ENCODE measurements at regions of chr1 and their contacts with region 1.

Region 1: GRCh38 chr1:206658264-206658980 is 23.1 kb downstream of the DYRK3 start:
- DNase-seq: peak; percentile 79
- ATAC-seq: peak; percentile 91
- H3K4me3 Mint-ChIP-seq: peak overlapping the region; percentile 58
- H3K27ac Mint-ChIP-seq: no peak overlapping the region
- H3K4me1 Mint-ChIP-seq: peaks cover 20% of the 10 kb centered on the region
- H3K27me3 Mint-ChIP-seq: peaks cover 43% of the 10 kb centered on the region
- CTCF ChIP-seq: peak; percentile 97

Region 2: GRCh38 chr1:206430031-206430983 is 228.1 kb before region 1 on chr1:
- CTCF ChIA-PET with region 1: no interaction called
- POLR2A ChIA-PET with region 1: no interaction called
- DNase-seq: no peak
- ATAC-seq: no peak
- H3K4me3 Mint-ChIP-seq: no peak overlapping the region
- H3K27ac Mint-ChIP-seq: no peak overlapping the region
- H3K4me1 Mint-ChIP-seq: no peaks in the 10 kb centered on the region
- H3K27me3 Mint-ChIP-seq: no peaks in the 10 kb centered on the region
- CTCF ChIP-seq: no peak

Region 3: DNA sequence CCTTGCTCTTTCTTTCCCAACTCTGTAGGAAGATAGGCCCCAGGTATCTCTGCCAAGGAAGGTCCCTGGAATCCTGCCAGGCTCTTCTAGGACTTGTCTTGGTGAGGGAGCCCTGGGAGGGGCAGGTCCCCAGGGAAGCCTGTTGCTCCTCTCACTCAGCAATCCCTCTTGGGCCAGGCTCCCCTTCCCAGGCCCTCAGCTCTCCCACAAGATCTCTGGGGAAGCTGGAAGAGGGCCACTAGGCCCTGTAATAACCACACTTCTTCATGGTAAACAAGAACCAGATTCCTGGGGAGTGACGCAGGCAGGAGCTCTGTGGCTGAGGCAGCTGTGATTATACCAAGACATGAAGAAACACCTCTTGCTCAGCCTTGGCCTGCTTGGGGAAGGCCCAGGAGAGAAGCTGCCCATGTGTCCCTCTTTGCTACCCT is 16.3 kb after region 1 on chr1:
- CTCF ChIA-PET with region 1: interaction called, 37 read pairs
- POLR2A ChIA-PET with region 1: no interaction called
- DNase-seq: no peak
- ATAC-seq: no peak
- H3K4me3 Mint-ChIP-seq: no peak overlapping the region
- H3K27ac Mint-ChIP-seq: no peak overlapping the region
- H3K4me1 Mint-ChIP-seq: peaks cover 8% of the 10 kb centered on the region
- H3K27me3 Mint-ChIP-seq: peaks cover 8% of the 10 kb centered on the region; the same call in 1 of the 2 replicates
- CTCF ChIP-seq: no peak

Region 4: DNA sequence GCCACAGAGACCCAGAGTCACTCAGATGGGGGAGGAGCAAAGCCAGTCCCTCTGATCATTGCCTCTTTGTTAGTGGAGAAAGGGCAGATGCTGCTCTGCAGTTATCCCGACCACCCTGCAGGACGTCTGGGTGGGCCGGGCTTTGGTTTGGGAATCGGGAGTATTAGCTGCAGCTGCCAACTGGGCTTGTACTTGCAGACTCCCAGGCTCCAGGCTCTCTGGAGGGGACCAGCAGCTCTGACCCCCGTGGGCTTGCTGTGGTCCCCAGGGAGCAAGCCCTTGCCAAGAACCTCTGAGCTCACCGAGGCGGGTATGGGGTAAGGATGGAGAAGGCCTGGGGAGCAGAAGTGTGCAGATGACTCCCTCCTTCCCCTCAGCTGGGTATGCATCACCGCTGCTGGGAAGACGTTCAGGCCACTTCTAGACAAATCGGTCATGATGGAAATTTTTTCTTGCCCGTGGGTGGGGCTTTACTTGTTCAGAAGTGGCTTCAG is 47.9 kb after region 1 on chr1:
- CTCF ChIA-PET with region 1: interaction called, 16 read pairs
- POLR2A ChIA-PET with region 1: no interaction called
- DNase-seq: no peak
- ATAC-seq: peak; percentile 50
- H3K4me3 Mint-ChIP-seq: no peak overlapping the region
- H3K27ac Mint-ChIP-seq: no peak overlapping the region
- H3K4me1 Mint-ChIP-seq: peaks cover 76% of the 10 kb centered on the region
- H3K27me3 Mint-ChIP-seq: no peaks in the 10 kb centered on the region
- CTCF ChIP-seq: no peak

Region 5: DNA sequence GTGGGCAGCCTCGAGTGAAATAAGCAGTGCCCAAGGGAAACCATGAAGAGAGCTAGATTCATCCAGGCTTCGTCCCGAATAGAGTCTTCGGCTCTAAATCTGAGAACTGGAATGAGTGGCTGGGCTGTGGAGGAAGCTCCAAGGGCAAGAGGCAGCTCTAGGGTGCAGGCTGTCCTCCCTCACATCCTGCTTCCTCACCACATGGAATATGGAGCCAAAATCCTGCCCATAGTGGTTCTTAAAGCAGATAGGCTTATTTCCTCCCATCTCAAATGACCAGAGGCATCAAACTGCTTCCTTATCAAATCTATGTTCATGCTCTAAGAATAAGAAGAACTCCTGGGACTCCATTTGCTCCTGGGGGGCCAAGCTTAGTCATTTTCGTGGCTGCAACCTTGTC is 241.3 kb after region 1 on chr1:
- CTCF ChIA-PET with region 1: no interaction called
- POLR2A ChIA-PET with region 1: no interaction called
- DNase-seq: no peak
- ATAC-seq: no peak
- H3K4me3 Mint-ChIP-seq: no peak overlapping the region
- H3K27ac Mint-ChIP-seq: no peak overlapping the region
- H3K4me1 Mint-ChIP-seq: peaks cover 5% of the 10 kb centered on the region; the same call in 1 of the 2 replicates
- H3K27me3 Mint-ChIP-seq: no peaks in the 10 kb centered on the region; the same call in 1 of the 2 replicates
- CTCF ChIP-seq: no peak

Measured in WTC11 (cell line).